ENCODE measurements at regions of chr17 and their contacts with region 1.

Region 1: DNA sequence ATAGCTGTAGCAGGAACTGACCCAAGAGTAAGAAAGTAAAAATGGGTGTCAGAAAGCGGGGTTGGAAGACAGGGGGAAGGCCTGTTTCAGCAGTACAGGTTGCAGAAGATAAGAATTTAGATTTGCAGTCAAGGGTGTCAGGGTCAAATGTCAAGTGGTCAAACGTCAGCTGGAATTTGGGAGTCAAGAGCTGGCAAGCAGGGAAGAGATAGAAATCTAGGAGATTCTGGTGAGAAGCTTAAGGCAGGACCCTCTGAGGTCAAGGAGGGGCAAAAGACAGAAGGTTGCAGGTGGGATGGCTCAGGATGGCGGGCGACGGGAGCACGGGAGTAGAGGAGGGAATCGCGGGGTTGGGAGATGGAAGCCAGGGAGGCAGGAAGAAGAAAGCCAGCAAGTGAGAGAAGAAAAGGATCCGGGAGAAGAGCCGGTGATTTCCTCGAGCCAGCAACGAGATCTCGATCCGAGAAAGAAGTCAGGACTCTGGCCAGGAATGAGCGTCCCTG is 335 bp downstream of the SLC25A35 start:
- DNase-seq: no peak
- H3K4me3 ChIP-seq: peak overlapping the region in 2 of 3 donors; percentile 32 to 45
- H3K27ac ChIP-seq: peak overlapping the region; percentile 79 to 92 (median 92)
- H3K4me1 ChIP-seq: peaks cover 3 to 12% of the 10 kb centered on the region in 2 donors
- H3K27me3 ChIP-seq: no peaks in the 10 kb centered on the region
- CTCF ChIP-seq: no peak
- POLR2A ChIP-seq: no peak

Region 2: GRCh38 chr17:8173056-8173870 is 121.6 kb before region 1 on chr17:
- intact Hi-C with region 1: no loop called
- DNase-seq: peak; percentile 83 to 86
- H3K4me3 ChIP-seq: peak overlapping the region in 1 of 3 donors; percentile 8
- H3K27ac ChIP-seq: peak overlapping the region; percentile 88 to 97 (median 94)
- H3K4me1 ChIP-seq: peaks cover 21 to 38% of the 10 kb centered on the region in 2 donors
- H3K27me3 ChIP-seq: no peaks in the 10 kb centered on the region
- CTCF ChIP-seq: no peak
- POLR2A ChIP-seq: peak; percentile 94 to 100

Region 3: GRCh38 chr17:8189711-8190477 is 105.0 kb before region 1 on chr17 and contains the start of gene BORCS6:
- intact Hi-C with region 1: loop called (anchors 10 kb)
- DNase-seq: peak; percentile 98 to 99
- H3K4me3 ChIP-seq: peak within 1 kb of the TSS; percentile 42 to 95 (median 83)
- H3K27ac ChIP-seq: peak within 1 kb of the TSS; percentile 96 to 99 (median 96)
- H3K4me1 ChIP-seq: peaks cover 20 to 41% of the 10 kb centered on the region in 2 donors
- H3K27me3 ChIP-seq: no peaks in the 10 kb centered on the region
- CTCF ChIP-seq: peak in 1 of 6 experiments; percentile 12
- POLR2A ChIP-seq: peak in 1 of 2 donors; percentile 88
- total RNA-seq, gene BORCS6: 7.7 to 17.0 (median 15.5) TPM

Region 4: DNA sequence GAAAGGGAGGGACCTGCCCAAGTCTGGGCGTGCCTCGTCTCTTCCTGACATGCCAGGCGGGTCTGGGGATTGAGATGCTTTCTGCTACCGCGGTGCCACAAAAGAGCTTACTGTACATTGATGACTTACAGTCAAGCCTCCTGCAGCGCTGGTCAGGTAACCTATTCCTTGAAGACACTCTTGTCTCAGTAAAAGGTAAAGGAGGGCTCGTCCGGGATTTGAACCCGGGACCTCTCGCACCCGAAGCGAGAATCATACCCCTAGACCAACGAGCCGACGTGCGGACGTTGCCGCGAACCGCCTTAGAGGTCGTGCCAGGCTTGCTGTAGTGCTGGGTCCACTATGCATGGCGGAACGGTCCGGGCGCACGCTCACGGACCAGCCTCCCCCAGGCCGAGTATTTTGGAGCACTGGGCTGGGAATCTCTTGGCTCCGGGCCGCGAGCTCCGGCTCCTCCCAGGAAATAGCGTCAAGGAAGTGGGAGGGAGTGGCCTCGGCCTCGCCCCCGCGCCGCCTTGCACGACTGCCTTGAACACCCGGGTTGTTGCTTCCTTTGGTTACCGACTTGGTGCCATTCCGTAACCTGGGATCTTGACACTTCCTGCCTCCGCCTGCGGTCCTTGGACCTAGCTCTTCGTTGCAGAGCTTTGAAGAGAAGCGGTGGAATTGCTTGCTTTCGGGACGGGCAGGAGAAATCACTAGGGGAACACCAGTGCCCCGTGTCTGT is 72.1 kb before region 1 on chr17:
- intact Hi-C with region 1: loop called (anchors 10 kb)
- DNase-seq: peak; percentile 95
- H3K4me3 ChIP-seq: peak overlapping the region; percentile 3 to 66 (median 25)
- H3K27ac ChIP-seq: peak overlapping the region; percentile 93 to 99 (median 98)
- H3K4me1 ChIP-seq: peaks cover 8 to 18% of the 10 kb centered on the region in 2 donors
- H3K27me3 ChIP-seq: no peaks in the 10 kb centered on the region
- CTCF ChIP-seq: no peak
- POLR2A ChIP-seq: peak; percentile 48 to 89

Region 5: DNA sequence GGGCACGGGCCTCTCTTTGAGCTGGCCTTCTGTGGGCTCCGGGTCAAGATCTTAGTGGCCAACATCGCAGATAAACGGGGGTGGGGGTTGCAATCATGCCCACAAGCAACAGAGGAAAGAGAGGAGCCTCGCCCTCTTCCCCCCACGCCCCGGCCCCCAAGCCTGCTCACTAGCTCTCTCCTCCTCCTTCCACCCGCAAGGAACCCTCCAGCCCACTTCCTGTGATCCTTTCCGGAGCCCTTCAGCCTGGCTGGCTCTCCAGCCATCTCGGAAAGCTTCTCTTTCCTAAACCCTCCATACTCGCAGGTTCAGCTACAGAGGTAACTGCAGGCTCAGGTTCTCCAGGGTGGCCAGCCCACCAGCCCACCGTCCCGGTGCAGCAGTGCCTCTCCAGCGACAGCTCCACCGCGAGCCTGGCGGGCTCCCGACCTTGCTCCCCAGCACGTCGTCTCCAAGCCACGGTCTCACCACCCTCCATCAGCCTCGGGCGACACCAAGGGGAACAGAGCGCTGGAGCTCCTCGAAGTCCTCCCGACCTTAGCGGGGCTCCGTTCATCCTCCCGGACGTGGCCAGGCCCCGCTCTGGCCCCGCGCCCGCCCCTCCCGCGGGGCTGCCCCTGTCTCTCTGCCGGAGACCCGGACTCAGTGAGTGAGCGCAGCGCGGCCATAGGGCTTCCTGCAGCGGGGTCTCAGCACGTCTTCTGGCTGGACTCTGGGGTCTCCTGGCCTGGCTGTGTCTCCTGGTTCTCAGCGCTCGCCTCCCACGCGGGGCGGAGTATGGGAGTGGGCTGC is 31.8 kb after region 1 on chr17:
- intact Hi-C with region 1: no loop called
- DNase-seq: peak; percentile 26 to 27
- H3K4me3 ChIP-seq: peak overlapping the region; percentile 22 to 45 (median 26)
- H3K27ac ChIP-seq: peak overlapping the region in 2 of 3 donors; percentile 35 to 46
- H3K4me1 ChIP-seq: peaks cover 9 to 14% of the 10 kb centered on the region in 2 donors
- H3K27me3 ChIP-seq: no peaks in the 10 kb centered on the region
- CTCF ChIP-seq: no peak
- POLR2A ChIP-seq: no peak

Region 6: GRCh38 chr17:8375738-8376259 is 80.9 kb after region 1 on chr17:
- intact Hi-C with region 1: no loop called
- DNase-seq: peak; percentile 33 to 41
- H3K4me3 ChIP-seq: peak overlapping the region; percentile 61 to 63 (median 61)
- H3K27ac ChIP-seq: peak overlapping the region; percentile 63 to 88 (median 80)
- H3K4me1 ChIP-seq: peaks cover 9 to 21% of the 10 kb centered on the region in 2 donors
- H3K27me3 ChIP-seq: no peaks in the 10 kb centered on the region
- CTCF ChIP-seq: no peak
- POLR2A ChIP-seq: peak in 1 of 2 donors; percentile 8

Region 7: GRCh38 chr17:8447799-8448198 is 152.9 kb after region 1 on chr17:
- intact Hi-C with region 1: no loop called
- DNase-seq: no peak
- H3K4me3 ChIP-seq: no peak overlapping the region
- H3K27ac ChIP-seq: no peak overlapping the region
- H3K4me1 ChIP-seq: peaks cover 0 to 4% of the 10 kb centered on the region in 2 donors
- H3K27me3 ChIP-seq: no peaks in the 10 kb centered on the region
- CTCF ChIP-seq: no peak
- POLR2A ChIP-seq: no peak